Calu3 (cell line): ENCODE measurements at regions of chr2 and their contacts with region 1.

Region 1: GRCh38 chr2:54704688-54705605 is 18.5 kb upstream of the EML6 start:
- DNase-seq: no peak
- H3K4me3 Mint-ChIP-seq: no peak overlapping the region
- H3K27ac Mint-ChIP-seq: no peak overlapping the region
- H3K4me1 Mint-ChIP-seq: no peaks in the 10 kb centered on the region
- H3K27me3 Mint-ChIP-seq: peaks cover 3% of the 10 kb centered on the region
- CTCF ChIP-seq: peak; percentile 30

Region 2: DNA sequence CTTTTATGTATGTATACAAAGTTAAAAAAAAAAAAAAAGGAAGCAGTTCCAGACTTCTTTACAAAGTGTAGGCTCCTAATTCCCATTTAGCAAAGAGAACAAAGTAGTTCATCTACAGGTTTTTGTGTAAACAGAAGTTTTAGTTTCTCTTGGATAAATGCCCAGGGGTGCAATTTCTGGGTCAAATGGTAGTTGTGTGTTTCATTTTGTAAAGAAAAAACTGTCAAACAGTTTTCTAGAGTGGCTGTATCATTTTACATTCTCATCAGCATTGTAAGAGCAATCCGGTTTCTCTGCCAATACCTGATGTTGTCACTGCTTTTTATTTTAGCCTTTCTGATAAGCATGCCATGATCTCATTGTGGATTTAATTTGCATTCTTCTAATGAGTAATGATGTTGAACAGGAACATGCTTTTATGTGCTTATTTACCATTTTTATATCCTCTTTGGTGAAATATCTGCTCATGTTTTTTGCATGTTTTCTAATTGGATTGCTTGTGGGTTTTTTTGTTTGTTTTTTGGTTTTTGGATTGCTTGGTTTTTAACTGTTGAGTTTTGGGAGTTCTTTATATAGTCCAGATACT is 717.5 kb before region 1 on chr2:
- CTCF ChIA-PET with region 1: no interaction called
- intact Hi-C with region 1: no loop called
- DNase-seq: peak; percentile 26
- H3K4me3 Mint-ChIP-seq: no peak overlapping the region
- H3K27ac Mint-ChIP-seq: peak overlapping the region; percentile 75
- H3K4me1 Mint-ChIP-seq: peaks cover 19% of the 10 kb centered on the region
- H3K27me3 Mint-ChIP-seq: no peaks in the 10 kb centered on the region
- CTCF ChIP-seq: no peak

Region 3: GRCh38 chr2:54115284-54116137 is 589.4 kb before region 1 on chr2 and contains the start of gene ACYP2:
- CTCF ChIA-PET with region 1: no interaction called
- intact Hi-C with region 1: loop called (anchors 2 kb)
- DNase-seq: peak; percentile 95
- H3K4me3 Mint-ChIP-seq: peak within 1 kb of the TSS; percentile 99
- H3K27ac Mint-ChIP-seq: peak within 1 kb of the TSS; percentile 99
- H3K4me1 Mint-ChIP-seq: peaks cover 12% of the 10 kb centered on the region
- H3K27me3 Mint-ChIP-seq: no peaks in the 10 kb centered on the region
- CTCF ChIP-seq: no peak
- total RNA-seq, gene ACYP2: 10.5 and 10.9 TPM in 2 replicates

Region 4: DNA sequence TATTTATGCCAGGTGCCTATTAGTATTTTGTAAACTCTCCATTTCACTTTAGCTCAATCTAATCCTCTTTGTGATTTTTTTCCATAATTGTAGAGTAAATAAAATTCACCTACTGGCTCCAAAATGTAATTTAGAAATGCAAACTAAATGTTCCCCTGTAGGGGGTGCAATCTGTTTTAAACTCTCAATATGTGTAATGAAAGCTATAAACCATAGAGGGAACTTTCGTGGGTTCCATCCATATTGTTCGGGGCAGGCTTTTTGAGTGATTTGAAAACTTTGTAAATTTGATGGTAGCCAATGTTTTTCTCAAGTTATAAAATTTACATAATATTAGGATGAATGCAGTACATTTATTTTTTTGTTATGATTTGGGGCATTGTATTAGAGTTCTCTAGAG is 498.4 kb before region 1 on chr2:
- CTCF ChIA-PET with region 1: interaction called, 3 read pairs
- intact Hi-C with region 1: loop called (anchors 2 kb)
- DNase-seq: peak; percentile 28
- H3K4me3 Mint-ChIP-seq: no peak overlapping the region
- H3K27ac Mint-ChIP-seq: no peak overlapping the region
- H3K4me1 Mint-ChIP-seq: no peaks in the 10 kb centered on the region
- H3K27me3 Mint-ChIP-seq: no peaks in the 10 kb centered on the region
- CTCF ChIP-seq: peak; percentile 48

Region 5: DNA sequence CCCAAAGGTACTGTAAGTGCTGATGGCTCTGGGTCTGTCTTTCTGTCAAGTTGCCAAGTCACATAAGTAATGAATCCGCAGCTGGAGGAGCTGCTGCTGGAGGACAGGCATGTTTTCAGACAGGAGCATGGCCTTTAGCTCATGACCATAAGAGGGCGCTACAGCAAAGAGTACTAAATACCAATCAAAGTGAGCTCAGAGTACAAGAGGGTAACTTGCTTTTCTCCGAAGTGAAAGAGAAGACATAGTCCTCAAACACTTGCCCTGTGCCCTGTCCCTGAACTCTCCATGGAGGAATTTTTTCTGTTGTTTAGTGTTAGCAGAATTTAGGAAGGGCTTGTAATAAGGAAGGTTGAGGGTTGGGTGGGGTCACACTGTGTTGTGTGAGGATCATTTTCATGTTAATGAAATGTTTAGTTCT is 39.5 kb before region 1 on chr2:
- CTCF ChIA-PET with region 1: interaction called, 18 read pairs
- intact Hi-C with region 1: loop called (anchors 5 kb)
- DNase-seq: peak; percentile 40
- H3K4me3 Mint-ChIP-seq: no peak overlapping the region
- H3K27ac Mint-ChIP-seq: no peak overlapping the region
- H3K4me1 Mint-ChIP-seq: peaks cover 9% of the 10 kb centered on the region
- H3K27me3 Mint-ChIP-seq: no peaks in the 10 kb centered on the region
- CTCF ChIP-seq: peak; percentile 38